Mucosa of descending colon (tissue), 3 donors: ENCODE measurements at regions of chr1 and their contacts with region 1.

Region 1: DNA sequence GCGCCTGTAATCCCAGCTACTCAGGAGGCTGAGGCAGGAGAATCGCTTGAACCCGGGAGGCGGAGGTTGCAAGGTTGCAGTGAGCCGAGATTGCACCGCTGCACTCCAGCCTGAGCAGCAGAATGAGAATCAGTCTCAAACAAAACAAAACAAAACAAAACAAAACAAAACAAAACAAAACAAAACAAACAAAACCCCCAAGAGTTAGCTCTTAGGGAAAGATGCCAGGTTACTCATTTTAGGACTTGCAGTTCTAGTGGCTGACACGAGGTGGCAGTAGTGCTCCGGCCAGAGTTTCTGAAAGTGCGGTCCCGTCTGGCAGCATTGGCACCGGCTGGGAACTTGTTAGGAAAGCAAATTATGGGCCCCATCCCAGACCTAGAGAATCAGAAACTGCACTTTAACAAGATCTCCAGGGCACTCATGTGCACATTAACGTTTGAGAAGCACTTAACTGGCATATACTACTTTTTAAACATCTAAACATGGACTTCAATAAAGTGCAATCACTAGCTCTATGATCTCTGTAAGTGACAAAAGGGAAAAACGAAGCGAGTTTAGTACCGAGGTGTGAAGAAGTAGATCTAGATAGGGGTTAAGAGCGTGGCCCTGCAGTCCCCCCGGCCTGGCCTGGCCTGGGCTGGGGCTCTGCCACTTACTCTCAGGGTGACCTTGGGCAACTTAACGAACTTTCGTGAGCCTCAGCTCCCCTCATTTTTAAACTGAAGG is 41.9 kb upstream of the TNFRSF1B start:
- DNase-seq: peak in 2 of 3 donors; percentile 78 to 85
- ATAC-seq: peak; percentile 90
- H3K4me3 ChIP-seq: no peak overlapping the region
- H3K4me1 ChIP-seq: no peaks in the 10 kb centered on the region
- CTCF ChIP-seq: peak; percentile 94

Region 2: GRCh38 chr1:12208764-12209494 is 84.1 kb after region 1 on chr1:
- intact Hi-C with region 1: loop called (anchors 2 kb)
- DNase-seq: peak; percentile 85 to 94 (median 90)
- ATAC-seq: peak; percentile 89
- H3K4me3 ChIP-seq: no peak overlapping the region
- H3K4me1 ChIP-seq: peaks cover 4% of the 10 kb centered on the region
- CTCF ChIP-seq: peak; percentile 88